Caco-2 (cell line): ENCODE measurements at regions of chr9 and their contacts with region 1.

Region 1: GRCh38 chr9:21096172-21096900 is 18.6 kb upstream of the IFNB1 start:
- DNase-seq: peak in 1 of 2 experiments; percentile 17
- H3K4me3 ChIP-seq: no peak overlapping the region
- H3K4me3 Mint-ChIP-seq: peak overlapping the region; percentile 1
- H3K27ac Mint-ChIP-seq: peak overlapping the region; percentile 55
- H3K4me1 ChIP-seq: peaks cover 34% of the 10 kb centered on the region
- H3K4me1 Mint-ChIP-seq: peaks cover 19% of the 10 kb centered on the region
- H3K27me3 ChIP-seq: no peaks in the 10 kb centered on the region
- H3K27me3 Mint-ChIP-seq: no peaks in the 10 kb centered on the region
- CTCF ChIP-seq: no peak

Region 2: DNA sequence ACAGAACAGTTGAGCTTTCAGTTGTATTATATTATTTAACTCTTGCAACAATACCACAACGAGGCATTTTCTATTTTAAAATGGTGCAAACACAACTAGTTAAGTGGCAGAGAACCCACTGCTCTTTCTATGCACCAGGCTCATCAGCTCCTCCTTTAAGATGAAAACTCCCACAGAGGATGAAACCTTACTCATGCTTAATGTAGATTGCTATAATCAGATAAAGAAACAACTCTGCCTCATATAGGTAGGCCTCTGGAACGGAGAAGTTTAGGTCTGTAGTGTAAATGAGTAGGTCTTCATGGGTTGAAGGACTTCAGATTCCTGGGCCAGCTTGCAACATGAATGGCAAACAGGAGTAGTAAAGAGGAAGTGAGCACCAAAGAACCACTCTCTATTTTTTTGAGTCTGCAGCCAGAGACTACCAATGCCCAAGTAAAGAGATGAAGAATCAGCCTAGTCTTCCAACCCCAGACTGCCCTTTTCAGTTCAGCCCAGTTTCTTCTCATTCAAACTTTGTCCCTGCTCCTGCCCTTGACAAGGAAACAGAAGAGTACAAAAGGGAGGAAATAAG is 98.7 kb before region 1 on chr9:
- CTCF ChIA-PET with region 1: no interaction called
- POLR2A ChIA-PET with region 1: no interaction called
- intact Hi-C with region 1: no loop called
- DNase-seq: no peak
- H3K4me3 ChIP-seq: no peak overlapping the region
- H3K4me3 Mint-ChIP-seq: no peak overlapping the region
- H3K27ac Mint-ChIP-seq: no peak overlapping the region
- H3K4me1 ChIP-seq: no peaks in the 10 kb centered on the region
- H3K4me1 Mint-ChIP-seq: no peaks in the 10 kb centered on the region
- H3K27me3 ChIP-seq: no peaks in the 10 kb centered on the region
- H3K27me3 Mint-ChIP-seq: no peaks in the 10 kb centered on the region
- CTCF ChIP-seq: no peak

Region 3: GRCh38 chr9:21042466-21042865 is 53.9 kb before region 1 on chr9:
- CTCF ChIA-PET with region 1: no interaction called
- POLR2A ChIA-PET with region 1: no interaction called
- intact Hi-C with region 1: no loop called
- DNase-seq: no peak
- H3K4me3 ChIP-seq: no peak overlapping the region
- H3K4me3 Mint-ChIP-seq: no peak overlapping the region
- H3K27ac Mint-ChIP-seq: no peak overlapping the region
- H3K4me1 ChIP-seq: no peaks in the 10 kb centered on the region
- H3K4me1 Mint-ChIP-seq: no peaks in the 10 kb centered on the region
- H3K27me3 ChIP-seq: no peaks in the 10 kb centered on the region
- H3K27me3 Mint-ChIP-seq: no peaks in the 10 kb centered on the region
- CTCF ChIP-seq: no peak

Region 4: GRCh38 chr9:21056931-21057330 is 39.4 kb before region 1 on chr9:
- CTCF ChIA-PET with region 1: no interaction called
- POLR2A ChIA-PET with region 1: no interaction called
- intact Hi-C with region 1: no loop called
- DNase-seq: no peak
- H3K4me3 ChIP-seq: no peak overlapping the region
- H3K4me3 Mint-ChIP-seq: no peak overlapping the region
- H3K27ac Mint-ChIP-seq: no peak overlapping the region
- H3K4me1 ChIP-seq: no peaks in the 10 kb centered on the region
- H3K4me1 Mint-ChIP-seq: no peaks in the 10 kb centered on the region
- H3K27me3 ChIP-seq: no peaks in the 10 kb centered on the region
- H3K27me3 Mint-ChIP-seq: no peaks in the 10 kb centered on the region
- CTCF ChIP-seq: no peak

Region 5: DNA sequence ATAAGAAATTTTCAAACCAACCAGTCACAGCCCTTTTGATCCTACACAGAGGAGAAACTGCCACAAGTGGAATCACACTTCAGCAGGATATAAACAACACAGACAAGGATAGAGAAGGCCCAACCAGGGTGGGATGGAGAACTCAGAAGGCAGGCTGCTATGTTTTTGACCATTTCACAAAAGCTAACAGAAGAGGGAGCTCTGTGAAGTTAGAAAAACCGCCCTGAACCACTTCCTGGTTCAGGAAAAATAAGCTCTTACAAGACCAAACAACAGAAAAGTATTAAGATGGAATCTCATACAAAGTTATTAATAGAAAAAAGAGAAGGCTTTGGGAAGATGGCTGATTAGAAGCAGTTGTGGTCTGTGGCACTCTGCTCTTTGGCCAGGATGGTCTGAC is 17.6 kb before region 1 on chr9:
- CTCF ChIA-PET with region 1: interaction called, 4 read pairs
- POLR2A ChIA-PET with region 1: no interaction called
- intact Hi-C with region 1: loop called (anchors 1 kb)
- DNase-seq: no peak
- H3K4me3 ChIP-seq: no peak overlapping the region
- H3K4me3 Mint-ChIP-seq: no peak overlapping the region
- H3K27ac Mint-ChIP-seq: no peak overlapping the region
- H3K4me1 ChIP-seq: no peaks in the 10 kb centered on the region
- H3K4me1 Mint-ChIP-seq: no peaks in the 10 kb centered on the region
- H3K27me3 ChIP-seq: no peaks in the 10 kb centered on the region
- H3K27me3 Mint-ChIP-seq: no peaks in the 10 kb centered on the region
- CTCF ChIP-seq: no peak

Region 6: DNA sequence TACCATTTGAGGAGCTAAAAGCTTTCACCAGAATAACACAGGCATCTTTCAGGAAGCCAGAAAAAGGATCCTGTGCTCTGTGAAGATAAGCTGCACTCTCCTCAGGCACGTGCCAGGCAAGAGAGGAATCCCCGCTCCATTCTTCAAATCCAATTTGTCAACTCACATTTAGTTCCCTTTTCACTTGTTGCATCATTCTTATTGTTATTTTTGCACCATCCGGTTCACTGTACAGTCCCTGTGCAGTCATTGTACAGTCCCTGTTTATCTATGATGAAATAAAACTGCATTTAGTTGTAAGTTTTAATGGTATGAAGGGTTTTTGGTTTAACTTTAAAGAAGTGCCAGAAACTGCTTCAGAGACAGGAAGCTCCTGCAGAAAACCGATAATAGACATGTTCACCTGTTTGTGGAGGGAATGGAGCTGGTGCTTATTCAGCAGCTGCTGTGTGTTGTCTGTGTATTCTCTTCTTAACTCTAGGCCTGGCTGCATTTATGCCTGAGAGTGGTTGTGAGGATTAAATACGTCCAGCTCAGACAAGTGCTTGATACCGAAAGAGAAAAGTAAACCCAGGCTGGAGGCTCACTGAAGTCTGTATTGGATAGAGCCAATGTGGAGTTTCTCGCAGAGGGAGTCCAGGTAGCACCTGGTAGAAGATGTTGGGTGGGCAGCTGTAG is 22.9 kb after region 1 on chr9:
- CTCF ChIA-PET with region 1: no interaction called
- POLR2A ChIA-PET with region 1: no interaction called
- intact Hi-C with region 1: no loop called
- DNase-seq: no peak
- H3K4me3 ChIP-seq: no peak overlapping the region
- H3K4me3 Mint-ChIP-seq: no peak overlapping the region
- H3K27ac Mint-ChIP-seq: no peak overlapping the region
- H3K4me1 ChIP-seq: peaks cover 18% of the 10 kb centered on the region; the same call in 1 of the 2 replicates
- H3K4me1 Mint-ChIP-seq: peaks cover 18% of the 10 kb centered on the region
- H3K27me3 ChIP-seq: no peaks in the 10 kb centered on the region
- H3K27me3 Mint-ChIP-seq: no peaks in the 10 kb centered on the region
- CTCF ChIP-seq: no peak